Naive thymus-derived CD4-positive, alpha-beta T cell (primary cell): ENCODE measurements at regions of chr6 and their contacts with region 1.

Region 1: DNA sequence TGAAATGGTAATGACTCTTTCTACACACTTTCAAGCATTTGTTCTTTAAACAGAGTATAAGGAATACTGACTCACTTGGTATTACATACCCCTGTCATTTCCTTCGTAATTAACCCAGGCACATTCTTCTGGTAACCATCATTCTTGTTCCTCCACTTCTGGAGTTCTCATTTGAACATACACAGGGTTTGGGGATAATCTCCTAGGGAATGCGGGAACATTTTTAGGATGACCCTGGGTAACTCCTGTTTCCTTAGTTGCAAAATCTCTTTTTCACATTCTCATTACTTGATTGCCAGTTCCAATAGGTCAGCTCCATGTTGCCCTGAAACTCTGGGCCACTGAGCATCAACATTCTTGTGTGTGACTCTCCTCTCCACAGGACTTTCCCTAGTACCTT is 51.5 kb upstream of the E2F3 start:
- DNase-seq: no peak
- ATAC-seq: no peak
- H3K4me3 ChIP-seq: no peak overlapping the region
- H3K4me3 Mint-ChIP-seq: no peak overlapping the region
- H3K27ac ChIP-seq: no peak overlapping the region
- H3K27ac Mint-ChIP-seq: peak overlapping the region in 1 of 9 donors; percentile 37
- H3K4me1 ChIP-seq: no peaks in the 10 kb centered on the region
- H3K4me1 Mint-ChIP-seq: peaks cover 0 to 23% (median 0%) of the 10 kb centered on the region in 7 donors
- H3K27me3 ChIP-seq: no peaks in the 10 kb centered on the region
- H3K27me3 Mint-ChIP-seq: peaks cover 0 to 10% (median 0%) of the 10 kb centered on the region in 5 donors

Region 2: DNA sequence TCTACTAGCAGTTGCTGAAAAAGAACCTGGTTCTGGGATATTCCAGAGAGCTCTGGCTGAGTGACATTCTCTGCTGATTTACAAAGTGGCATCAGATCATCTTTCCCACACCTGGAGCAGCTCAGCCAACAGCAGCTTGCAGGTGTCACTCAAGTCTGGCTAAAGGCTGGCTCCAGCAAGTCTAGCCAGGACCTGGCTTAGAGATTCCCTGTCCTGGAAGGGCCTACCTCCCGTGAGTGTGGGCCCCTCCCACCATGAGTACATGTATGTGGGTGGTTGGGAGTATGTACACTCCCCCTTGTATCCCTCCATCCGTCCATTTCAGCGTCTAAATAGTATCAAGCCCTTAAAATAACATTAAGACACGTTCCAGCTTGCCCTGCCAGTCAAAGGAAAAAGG is 1052.3 kb before region 1 on chr6:
- CTCF ChIA-PET with region 1: no interaction called
- POLR2A ChIA-PET with region 1: no interaction called
- intact Hi-C with region 1: no loop called
- DNase-seq: no peak
- ATAC-seq: no peak
- H3K4me3 ChIP-seq: no peak overlapping the region
- H3K4me3 Mint-ChIP-seq: no peak overlapping the region
- H3K27ac ChIP-seq: no peak overlapping the region
- H3K27ac Mint-ChIP-seq: no peak overlapping the region
- H3K4me1 ChIP-seq: no peaks in the 10 kb centered on the region
- H3K4me1 Mint-ChIP-seq: no peaks in the 10 kb centered on the region
- H3K27me3 ChIP-seq: no peaks in the 10 kb centered on the region
- H3K27me3 Mint-ChIP-seq: no peaks in the 10 kb centered on the region

Region 3: GRCh38 chr6:20148433-20148832 is 201.8 kb before region 1 on chr6:
- CTCF ChIA-PET with region 1: no interaction called
- POLR2A ChIA-PET with region 1: no interaction called
- intact Hi-C with region 1: no loop called
- DNase-seq: no peak
- ATAC-seq: no peak
- H3K4me3 ChIP-seq: no peak overlapping the region
- H3K4me3 Mint-ChIP-seq: no peak overlapping the region
- H3K27ac ChIP-seq: no peak overlapping the region
- H3K27ac Mint-ChIP-seq: no peak overlapping the region
- H3K4me1 ChIP-seq: no peaks in the 10 kb centered on the region
- H3K4me1 Mint-ChIP-seq: no peaks in the 10 kb centered on the region
- H3K27me3 ChIP-seq: no peaks in the 10 kb centered on the region
- H3K27me3 Mint-ChIP-seq: no peaks in the 10 kb centered on the region

Region 4: DNA sequence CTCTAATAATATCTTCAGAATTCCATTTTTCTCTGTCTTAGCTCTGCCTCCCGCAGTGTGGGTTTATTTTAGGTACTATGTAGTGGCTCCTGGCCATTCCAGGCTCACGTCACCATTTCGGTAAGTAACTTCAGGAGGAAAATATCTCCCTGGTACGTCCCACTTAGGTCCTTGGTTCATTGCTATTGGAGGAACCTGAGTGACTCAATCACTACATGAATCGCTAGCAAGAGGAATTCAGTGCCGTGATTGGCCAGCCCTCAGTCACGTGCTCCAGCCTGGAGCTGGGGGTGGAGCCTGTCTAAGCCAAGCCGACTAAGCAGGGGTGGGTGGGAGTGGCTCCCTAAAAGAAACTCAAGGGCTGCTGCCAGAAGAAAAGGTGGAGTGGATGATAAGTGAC is 15.9 kb before region 1 on chr6:
- CTCF ChIA-PET with region 1: interaction called, 3 read pairs
- POLR2A ChIA-PET with region 1: interaction called, 11 read pairs
- intact Hi-C with region 1: no loop called
- DNase-seq: no peak
- ATAC-seq: no peak
- H3K4me3 ChIP-seq: no peak overlapping the region
- H3K4me3 Mint-ChIP-seq: no peak overlapping the region
- H3K27ac ChIP-seq: no peak overlapping the region
- H3K27ac Mint-ChIP-seq: no peak overlapping the region
- H3K4me1 ChIP-seq: peaks cover 0 to 11% of the 10 kb centered on the region in 2 donors
- H3K4me1 Mint-ChIP-seq: peaks cover 12 to 39% (median 33%) of the 10 kb centered on the region in 7 donors
- H3K27me3 ChIP-seq: no peaks in the 10 kb centered on the region
- H3K27me3 Mint-ChIP-seq: peaks cover 0 to 12% (median 0%) of the 10 kb centered on the region in 5 donors